ENCODE measurements at regions of chr19 and their contacts with region 1.

Region 1: DNA sequence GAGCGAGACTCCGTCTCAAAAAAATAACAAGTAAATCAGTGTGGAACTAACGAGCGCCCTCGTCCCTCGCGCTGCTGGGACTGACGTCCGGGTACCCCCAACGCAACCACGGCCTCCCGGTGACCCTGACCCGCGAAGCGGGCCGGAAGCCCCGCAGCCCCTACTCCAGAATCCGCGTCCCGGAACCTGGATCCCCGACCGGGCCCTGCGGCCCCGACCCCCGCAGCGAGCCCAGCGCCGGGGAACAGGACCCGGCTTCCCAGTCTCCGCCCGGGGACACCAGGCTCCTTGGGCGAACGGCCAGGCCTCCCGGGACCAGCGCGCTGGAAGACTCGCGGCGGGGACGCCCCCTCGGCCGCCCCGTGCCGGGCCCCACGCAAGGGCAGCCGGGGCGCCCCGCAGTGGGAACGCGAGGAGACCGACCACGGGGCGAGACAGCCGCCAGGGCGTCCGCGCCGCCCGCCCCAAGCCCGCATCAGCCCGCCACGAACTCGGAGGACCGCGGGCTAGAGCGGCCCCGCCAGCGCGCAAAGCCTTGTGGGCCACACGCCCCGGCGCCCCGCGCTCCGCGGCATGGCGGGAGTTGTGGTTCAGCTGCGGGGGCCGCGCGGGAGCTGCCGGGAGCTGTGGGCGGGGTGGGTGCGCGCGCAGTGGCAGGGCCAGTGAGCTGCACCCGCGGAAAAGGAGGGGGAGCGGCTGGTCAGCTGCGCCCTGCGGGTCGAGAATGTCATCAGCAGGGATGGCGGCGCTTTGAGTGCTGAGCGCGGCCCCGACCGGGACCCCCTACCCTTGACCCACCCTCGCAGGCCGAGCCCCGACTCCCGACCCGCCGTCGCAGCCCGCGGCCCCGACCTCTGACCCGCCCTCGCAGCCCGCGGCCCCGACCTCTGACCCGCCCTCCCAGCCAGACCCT is 7.5 kb upstream of the MADCAM1 start:
- DNase-seq: peak; percentile 94
- H3K4me3 ChIP-seq: peak overlapping the region; percentile 53 to 77 (median 65)
- H3K27ac ChIP-seq: peak overlapping the region; percentile 92
- H3K4me1 ChIP-seq: peaks cover 7% of the 10 kb centered on the region
- H3K27me3 ChIP-seq: no peaks in the 10 kb centered on the region
- CTCF ChIP-seq: no peak
- POLR2A ChIP-seq: peak; percentile 87

Region 2: DNA sequence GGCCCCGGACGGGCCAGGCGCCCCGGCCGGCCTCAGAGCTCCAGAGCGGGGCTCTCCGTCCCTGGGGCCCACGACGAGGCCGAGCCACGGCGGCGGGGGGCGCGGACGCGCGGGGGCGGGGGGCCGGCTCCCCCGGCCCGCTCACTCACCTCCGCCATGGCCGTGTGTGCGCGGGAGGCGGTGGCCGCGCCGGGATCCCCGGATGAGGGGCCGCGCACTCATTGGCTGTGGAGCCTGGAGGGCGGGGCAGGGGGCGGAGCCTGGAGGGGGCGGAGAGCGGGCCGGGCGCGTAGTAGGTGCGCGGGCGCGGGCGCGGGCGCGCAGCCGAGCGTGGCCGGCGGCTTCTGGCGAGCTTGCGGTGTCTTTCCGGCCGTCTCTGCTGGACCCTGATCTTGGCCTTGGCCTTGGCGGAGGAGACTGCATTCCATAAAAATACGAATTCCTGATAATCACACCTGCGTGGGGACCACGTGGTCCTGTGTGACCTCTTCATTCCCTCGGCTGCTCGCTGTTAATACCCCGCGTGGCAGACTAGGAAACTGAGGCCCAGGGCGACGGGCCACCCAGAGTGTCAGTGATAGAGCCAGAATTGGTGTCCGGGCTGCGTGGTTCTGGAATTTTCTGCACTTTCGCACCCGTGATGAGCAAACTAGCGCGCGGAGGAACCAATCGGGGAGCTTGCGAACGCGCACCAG is 144.0 kb before region 1 on chr19 and contains the start of gene MIER2:
- CTCF ChIA-PET with region 1: no interaction called
- POLR2A ChIA-PET with region 1: no interaction called
- dilution Hi-C with region 1: no loop called
- intact Hi-C with region 1: loop called (anchors 5 kb)
- DNase-seq: peak; percentile 74
- H3K4me3 ChIP-seq: peak within 1 kb of the TSS; percentile 73 to 89 (median 75)
- H3K27ac ChIP-seq: peak within 1 kb of the TSS; percentile 63
- H3K4me1 ChIP-seq: peaks cover 39% of the 10 kb centered on the region
- H3K27me3 ChIP-seq: no peaks in the 10 kb centered on the region
- CTCF ChIP-seq: no peak
- POLR2A ChIP-seq: no peak
- total RNA-seq, gene MIER2: 41.7 and 44.9 TPM in 2 replicates

Region 3: GRCh38 chr19:383922-384798 is 104.6 kb before region 1 on chr19:
- CTCF ChIA-PET with region 1: no interaction called
- POLR2A ChIA-PET with region 1: no interaction called
- dilution Hi-C with region 1: no loop called
- intact Hi-C with region 1: loop called (anchors 10 kb)
- DNase-seq: peak; percentile 34
- H3K4me3 ChIP-seq: no peak overlapping the region
- H3K27ac ChIP-seq: no peak overlapping the region
- H3K4me1 ChIP-seq: no peaks in the 10 kb centered on the region
- H3K27me3 ChIP-seq: peaks cover 2 to 15% of the 10 kb centered on the region in 2 experiments
- CTCF ChIP-seq: peak; percentile 37 to 69
- POLR2A ChIP-seq: no peak

Region 4: GRCh38 chr19:1057176-1057855 is 568.6 kb after region 1 on chr19:
- CTCF ChIA-PET with region 1: no interaction called
- POLR2A ChIA-PET with region 1: no interaction called
- dilution Hi-C with region 1: no loop called
- intact Hi-C with region 1: no loop called
- DNase-seq: peak; percentile 29
- H3K4me3 ChIP-seq: no peak overlapping the region
- H3K27ac ChIP-seq: no peak overlapping the region
- H3K4me1 ChIP-seq: no peaks in the 10 kb centered on the region
- H3K27me3 ChIP-seq: no peaks in the 10 kb centered on the region
- CTCF ChIP-seq: peak in 1 of 2 donors; percentile 19
- POLR2A ChIP-seq: no peak